PC-9 (cell line): ENCODE measurements at regions of chr10 and their contacts with region 1.

Region 1: DNA sequence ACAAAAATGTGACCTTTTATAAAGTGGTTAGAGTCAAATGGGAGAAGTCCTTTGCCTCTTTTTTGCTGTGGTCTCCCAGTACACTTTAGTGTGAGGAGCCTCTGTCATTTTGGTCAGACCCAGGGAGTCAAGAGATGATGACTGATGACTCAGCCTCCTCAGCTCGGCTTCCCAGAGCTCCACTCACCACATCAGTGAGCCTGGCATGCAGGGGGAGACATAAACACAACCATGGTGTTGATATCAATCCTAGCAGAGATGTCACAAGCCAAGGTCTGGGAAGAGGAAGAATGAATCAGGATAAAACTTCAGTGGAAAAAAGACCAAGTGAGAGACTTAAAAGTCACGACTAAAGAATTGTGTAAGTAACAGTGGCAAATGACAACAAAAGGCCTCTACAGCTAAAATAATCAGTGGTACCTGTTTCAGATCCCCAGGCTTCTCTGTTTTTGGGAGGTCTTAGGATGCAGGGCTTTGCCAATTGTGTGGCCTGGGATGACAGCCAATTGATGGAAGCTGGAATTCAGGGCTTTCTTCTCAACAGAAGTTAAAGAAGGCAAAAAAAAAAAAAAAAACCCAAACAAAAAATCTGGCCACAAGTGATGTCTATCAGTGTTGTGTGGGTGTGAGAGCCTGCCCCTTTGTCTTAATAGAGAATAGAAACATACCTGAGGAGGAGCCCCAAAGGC is 50.2 kb downstream of the TFAM start:
- DNase-seq: peak; percentile 70 to 89
- H3K4me3 ChIP-seq: peak overlapping the region; percentile 13; the same call in 1 of the 2 replicates
- H3K27ac ChIP-seq: peak overlapping the region; percentile 87
- H3K4me1 ChIP-seq: peaks cover 43% of the 10 kb centered on the region
- H3K27me3 ChIP-seq: no peaks in the 10 kb centered on the region
- CTCF ChIP-seq: no peak

Region 2: DNA sequence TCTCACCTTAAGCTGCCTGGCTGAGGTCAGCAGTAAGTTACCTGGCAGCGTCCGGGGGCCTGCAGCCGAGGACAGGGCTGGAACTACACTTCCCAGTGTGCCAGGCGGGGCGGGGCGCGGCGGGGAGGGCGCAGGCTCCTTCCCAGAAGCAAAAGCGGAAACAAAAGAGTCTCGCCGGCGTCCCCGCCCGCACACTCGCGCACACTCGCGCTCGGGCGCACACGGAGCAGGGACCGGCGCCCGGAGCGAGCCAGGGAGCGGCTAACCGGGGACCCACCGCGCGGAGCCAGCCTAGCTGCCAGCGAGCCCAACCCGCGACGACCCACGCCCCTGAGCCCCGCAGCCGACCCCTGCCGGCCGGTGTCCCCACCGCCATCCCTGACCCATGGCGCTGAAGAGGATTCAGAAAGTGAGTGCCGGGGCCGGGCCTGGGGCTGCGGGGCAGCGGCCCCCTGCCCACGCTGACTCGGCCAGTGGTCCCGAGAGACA is 100.6 kb before region 1 on chr10 and contains the start of gene UBE2D1:
- CTCF ChIA-PET with region 1: no interaction called
- POLR2A ChIA-PET with region 1: interaction called, 6 read pairs
- intact Hi-C with region 1: loop called (anchors 1 kb)
- DNase-seq: peak; percentile 78 to 89
- H3K4me3 ChIP-seq: peak within 1 kb of the TSS; percentile 66
- H3K27ac ChIP-seq: peak within 1 kb of the TSS; percentile 60
- H3K4me1 ChIP-seq: peaks cover 23% of the 10 kb centered on the region
- H3K27me3 ChIP-seq: no peaks in the 10 kb centered on the region
- CTCF ChIP-seq: no peak; the same call in 1 of the 2 replicates
- total RNA-seq, gene UBE2D1: 16.9 and 24.0 TPM in 2 replicates

Region 3: GRCh38 chr10:58393317-58393716 is 42.1 kb before region 1 on chr10:
- CTCF ChIA-PET with region 1: interaction called, 21 read pairs
- POLR2A ChIA-PET with region 1: no interaction called
- intact Hi-C with region 1: no loop called
- DNase-seq: no peak
- H3K4me3 ChIP-seq: no peak overlapping the region
- H3K27ac ChIP-seq: no peak overlapping the region
- H3K4me1 ChIP-seq: no peaks in the 10 kb centered on the region
- H3K27me3 ChIP-seq: no peaks in the 10 kb centered on the region
- CTCF ChIP-seq: peak; percentile 26; the same call in 1 of the 2 replicates

Region 4: DNA sequence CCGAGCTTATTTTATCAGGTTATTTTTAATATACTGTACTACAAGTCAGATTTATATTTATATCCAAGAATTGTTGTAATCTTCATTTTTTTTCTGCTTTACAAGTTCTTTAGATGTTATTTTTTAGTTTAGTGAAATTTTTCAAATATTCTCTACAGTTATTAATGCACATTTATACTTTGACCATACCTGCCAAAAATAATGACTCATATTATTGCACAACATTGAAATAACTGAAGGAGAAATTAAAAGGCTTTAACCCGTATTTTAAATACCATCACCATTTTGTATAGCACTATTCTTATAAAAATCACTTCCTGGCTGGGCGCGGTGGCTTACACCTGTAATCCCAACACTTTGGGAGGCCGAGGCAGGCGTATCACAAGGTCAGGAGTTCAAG is 355.7 kb after region 1 on chr10:
- CTCF ChIA-PET with region 1: no interaction called
- POLR2A ChIA-PET with region 1: no interaction called
- intact Hi-C with region 1: no loop called
- DNase-seq: peak; percentile 9 to 42
- H3K4me3 ChIP-seq: no peak overlapping the region
- H3K27ac ChIP-seq: no peak overlapping the region
- H3K4me1 ChIP-seq: no peaks in the 10 kb centered on the region
- H3K27me3 ChIP-seq: no peaks in the 10 kb centered on the region
- CTCF ChIP-seq: no peak